Gastrocnemius medialis (tissue), 4 donors: ENCODE measurements at regions of chr3 and their contacts with region 1.

Region 1: GRCh38 chr3:172039436-172040077 is at the start of gene FNDC3B:
- DNase-seq: peak; percentile 92
- ATAC-seq: peak; percentile 84 to 85
- H3K4me3 ChIP-seq: peak within 1 kb of the TSS; percentile 94 to 100 (median 98)
- H3K27ac ChIP-seq: peak within 1 kb of the TSS; percentile 99 to 100 (median 99)
- H3K4me1 ChIP-seq: peaks cover 27 to 35% of the 10 kb centered on the region in 2 donors
- H3K27me3 ChIP-seq: no peaks in the 10 kb centered on the region
- CTCF ChIP-seq: no peak
- POLR2A ChIP-seq: peak; percentile 87 to 99
- total RNA-seq, gene FNDC3B: 42.5 to 110 (median 74.2) TPM

Region 2: GRCh38 chr3:172094621-172095557 is 55.3 kb after region 1 on chr3:
- in situ Hi-C with region 1: no loop called
- intact Hi-C with region 1: loop called (anchors 5 kb)
- DNase-seq: no peak
- ATAC-seq: no peak
- H3K4me3 ChIP-seq: no peak overlapping the region
- H3K27ac ChIP-seq: peak overlapping the region; percentile 19 to 72 (median 44)
- H3K4me1 ChIP-seq: peaks cover 56 to 60% of the 10 kb centered on the region in 2 donors
- H3K27me3 ChIP-seq: no peaks in the 10 kb centered on the region
- CTCF ChIP-seq: no peak
- POLR2A ChIP-seq: no peak

Region 3: DNA sequence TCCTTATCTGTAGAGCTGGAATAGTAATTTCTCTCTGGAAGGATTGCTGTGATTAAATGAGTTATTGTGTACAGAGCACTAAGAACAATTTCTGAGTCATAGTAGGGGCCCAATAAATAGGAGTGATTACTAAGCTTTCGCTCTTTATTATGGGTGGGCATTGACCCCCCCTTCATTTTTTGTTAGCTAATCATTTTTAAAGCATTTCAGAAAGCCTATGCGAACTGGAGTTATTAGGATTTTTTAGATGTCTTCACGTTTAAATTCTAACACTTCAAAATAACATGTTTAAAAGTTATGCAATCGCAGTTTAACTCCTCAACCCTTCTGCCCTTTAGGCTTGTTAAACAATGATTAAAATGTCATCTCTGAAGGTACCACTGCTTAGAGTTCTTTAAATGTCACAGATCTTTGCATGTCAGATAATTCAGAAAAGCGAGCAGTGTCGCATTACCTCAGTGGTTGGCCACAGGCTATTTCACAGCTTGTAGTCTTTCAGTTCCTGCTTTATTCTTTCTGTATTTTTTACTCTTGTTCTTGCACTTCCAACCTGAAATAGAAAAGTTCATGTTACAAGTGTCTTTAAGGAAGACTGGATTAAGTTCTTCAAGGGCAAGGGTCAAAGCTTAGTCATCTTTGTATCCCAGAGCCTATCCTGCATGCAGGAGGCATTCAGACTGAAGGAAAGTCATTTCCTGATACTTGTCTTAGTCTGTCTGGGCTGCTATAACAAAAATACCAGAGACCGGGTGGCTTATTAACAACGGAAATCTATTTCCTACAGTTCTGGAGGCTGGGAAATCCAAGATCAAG is 102.7 kb after region 1 on chr3:
- in situ Hi-C with region 1: no loop called
- intact Hi-C with region 1: loop called (anchors 5 kb)
- DNase-seq: no peak
- ATAC-seq: peak in 1 of 2 donors; percentile 51
- H3K4me3 ChIP-seq: no peak overlapping the region
- H3K27ac ChIP-seq: peak overlapping the region; percentile 74 to 99 (median 85)
- H3K4me1 ChIP-seq: peaks cover 60 to 65% of the 10 kb centered on the region in 2 donors
- H3K27me3 ChIP-seq: no peaks in the 10 kb centered on the region
- CTCF ChIP-seq: no peak
- POLR2A ChIP-seq: no peak

Region 4: GRCh38 chr3:172153335-172153861 is 113.8 kb after region 1 on chr3:
- in situ Hi-C with region 1: no loop called
- intact Hi-C with region 1: no loop called
- DNase-seq: peak; percentile 94 to 95
- ATAC-seq: peak; percentile 96
- H3K4me3 ChIP-seq: peak overlapping the region in 2 of 4 donors; percentile 6 to 7
- H3K27ac ChIP-seq: peak overlapping the region; percentile 83 to 91 (median 84)
- H3K4me1 ChIP-seq: peaks cover 73 to 74% of the 10 kb centered on the region in 2 donors
- H3K27me3 ChIP-seq: no peaks in the 10 kb centered on the region
- CTCF ChIP-seq: no peak
- POLR2A ChIP-seq: peak; percentile 51 to 81

Region 5: GRCh38 chr3:172279191-172279640 is 239.7 kb after region 1 on chr3:
- in situ Hi-C with region 1: no loop called
- intact Hi-C with region 1: loop called (anchors 5 kb)
- DNase-seq: no peak
- ATAC-seq: peak in 1 of 2 donors; percentile 20
- H3K4me3 ChIP-seq: peak overlapping the region in 1 of 4 donors; percentile 2
- H3K27ac ChIP-seq: peak overlapping the region; percentile 48 to 77 (median 64)
- H3K4me1 ChIP-seq: peaks cover 65 to 67% of the 10 kb centered on the region in 2 donors
- H3K27me3 ChIP-seq: no peaks in the 10 kb centered on the region
- CTCF ChIP-seq: no peak
- POLR2A ChIP-seq: no peak

Region 6: GRCh38 chr3:172332256-172333041 is 292.9 kb after region 1 on chr3:
- in situ Hi-C with region 1: loop called in 2 of 4 experiments (anchors 10 kb)
- intact Hi-C with region 1: loop called (anchors 2 kb)
- DNase-seq: peak in 1 of 2 donors; percentile 48
- ATAC-seq: peak; percentile 68 to 85
- H3K4me3 ChIP-seq: no peak overlapping the region
- H3K27ac ChIP-seq: peak overlapping the region; percentile 10 to 53 (median 31)
- H3K4me1 ChIP-seq: no peaks in the 10 kb centered on the region
- H3K27me3 ChIP-seq: no peaks in the 10 kb centered on the region
- CTCF ChIP-seq: peak; percentile 72 to 90 (median 82)
- POLR2A ChIP-seq: no peak

Region 7: GRCh38 chr3:172476347-172476746 is 436.8 kb after region 1 on chr3:
- in situ Hi-C with region 1: loop called in 1 of 4 experiments (anchors 25 kb)
- intact Hi-C with region 1: loop called (anchors 10 kb)
- DNase-seq: no peak
- ATAC-seq: no peak
- H3K4me3 ChIP-seq: peak overlapping the region in 3 of 4 donors; percentile 54 to 64 (median 55)
- H3K27ac ChIP-seq: peak overlapping the region in 2 of 4 donors; percentile 55 to 56
- H3K4me1 ChIP-seq: peaks cover 0 to 3% of the 10 kb centered on the region in 2 donors
- H3K27me3 ChIP-seq: no peaks in the 10 kb centered on the region
- CTCF ChIP-seq: no peak
- POLR2A ChIP-seq: no peak